H1 (cell line): ENCODE measurements at regions of chr6 and their contacts with region 1.

Region 1: GRCh38 chr6:51618563-51618962 is 468.9 kb downstream of the PKHD1 start:
- DNase-seq: no peak
- H3K4me3 ChIP-seq: no peak overlapping the region
- H3K27ac ChIP-seq: no peak overlapping the region
- H3K4me1 ChIP-seq: no peaks in the 10 kb centered on the region; a peak in 1 of 7 replicates
- H3K27me3 ChIP-seq: no peaks in the 10 kb centered on the region
- CTCF ChIP-seq: peak in 1 of 3 experiments; percentile 20; a peak in 1 of 4 replicates
- EP300 ChIP-seq: no peak
- POLR2A ChIP-seq: no peak
- RAD21 ChIP-seq: no peak

Region 2: DNA sequence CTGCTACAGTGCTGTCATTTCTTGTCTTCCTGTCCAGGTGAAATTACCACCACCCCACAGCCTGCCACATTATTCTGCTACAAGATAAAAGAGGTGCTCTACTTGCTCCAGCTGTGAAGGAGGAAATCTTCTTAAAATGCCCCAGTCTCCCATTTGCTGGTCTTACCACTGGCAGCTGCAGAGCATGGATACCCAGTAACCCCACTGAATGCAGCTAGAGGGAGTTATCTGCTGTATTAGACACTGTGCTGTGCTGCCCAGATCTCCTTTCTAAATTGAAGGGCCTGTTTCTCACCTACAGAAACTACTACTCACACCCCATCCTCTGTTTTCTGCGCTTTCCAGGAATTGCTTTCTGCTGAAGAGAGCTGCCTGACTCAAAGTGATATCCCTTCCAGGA is 49.0 kb before region 1 on chr6:
- CTCF ChIA-PET with region 1: interaction called, 11 read pairs
- POLR2A ChIA-PET with region 1: no interaction called
- DNase-seq: no peak
- H3K4me3 ChIP-seq: no peak overlapping the region
- H3K27ac ChIP-seq: no peak overlapping the region
- H3K4me1 ChIP-seq: no peaks in the 10 kb centered on the region
- H3K27me3 ChIP-seq: peaks cover 0 to 1% (median 0%) of the 10 kb centered on the region in 4 experiments; a peak in 1 of 7 replicates
- CTCF ChIP-seq: peak; percentile 12 to 63 (median 54)
- EP300 ChIP-seq: no peak
- POLR2A ChIP-seq: no peak
- RAD21 ChIP-seq: peak; percentile 49 to 64

Region 3: GRCh38 chr6:51598171-51598570 is 20.4 kb before region 1 on chr6:
- CTCF ChIA-PET with region 1: interaction called, 16 read pairs
- POLR2A ChIA-PET with region 1: no interaction called
- DNase-seq: no peak
- H3K4me3 ChIP-seq: no peak overlapping the region
- H3K27ac ChIP-seq: no peak overlapping the region
- H3K4me1 ChIP-seq: no peaks in the 10 kb centered on the region
- H3K27me3 ChIP-seq: no peaks in the 10 kb centered on the region
- CTCF ChIP-seq: no peak
- EP300 ChIP-seq: no peak
- POLR2A ChIP-seq: no peak
- RAD21 ChIP-seq: no peak

Region 4: GRCh38 chr6:51630011-51630410 is 11.4 kb after region 1 on chr6:
- CTCF ChIA-PET with region 1: interaction called, 26 read pairs
- POLR2A ChIA-PET with region 1: no interaction called
- DNase-seq: no peak
- H3K4me3 ChIP-seq: no peak overlapping the region
- H3K27ac ChIP-seq: no peak overlapping the region
- H3K4me1 ChIP-seq: no peaks in the 10 kb centered on the region
- H3K27me3 ChIP-seq: no peaks in the 10 kb centered on the region
- CTCF ChIP-seq: no peak
- EP300 ChIP-seq: no peak
- POLR2A ChIP-seq: no peak
- RAD21 ChIP-seq: no peak

Region 5: DNA sequence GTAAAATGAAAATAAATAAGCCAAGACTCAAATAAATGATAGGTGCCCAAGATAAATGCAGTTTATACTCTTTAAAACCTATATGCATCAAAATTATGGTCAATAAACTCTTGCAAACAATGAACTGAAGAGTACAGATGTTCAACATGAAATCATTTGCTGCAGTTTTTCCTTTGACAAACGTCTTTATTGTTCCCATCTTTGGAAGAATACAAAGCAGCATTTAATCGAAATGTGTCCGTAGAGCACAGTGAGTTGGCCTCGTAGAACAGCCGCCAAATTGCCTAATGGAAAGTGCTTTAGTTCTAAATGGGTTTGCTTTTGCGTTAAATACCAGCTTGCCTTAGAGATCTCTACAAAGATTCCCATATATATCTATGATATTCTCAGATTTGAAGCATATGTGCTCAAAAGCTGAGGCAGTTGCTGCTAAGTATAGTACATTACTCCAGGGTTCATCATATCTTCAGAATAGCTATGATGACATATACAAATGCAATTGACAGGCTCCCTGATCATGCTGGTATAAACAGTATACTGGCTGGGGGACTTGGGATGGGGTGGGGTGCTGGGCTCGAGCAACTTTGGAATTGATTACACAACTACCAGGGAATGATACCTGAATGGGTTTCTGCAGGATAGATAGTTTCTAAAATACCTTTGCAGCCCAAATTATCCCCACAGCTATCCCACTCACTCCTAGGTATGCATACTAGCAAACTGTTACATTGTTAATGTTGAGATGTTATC is 21.6 kb after region 1 on chr6:
- CTCF ChIA-PET with region 1: interaction called, 11 read pairs
- POLR2A ChIA-PET with region 1: no interaction called
- DNase-seq: no peak
- H3K4me3 ChIP-seq: no peak overlapping the region
- H3K27ac ChIP-seq: no peak overlapping the region
- H3K4me1 ChIP-seq: no peaks in the 10 kb centered on the region
- H3K27me3 ChIP-seq: no peaks in the 10 kb centered on the region
- CTCF ChIP-seq: no peak
- EP300 ChIP-seq: no peak
- POLR2A ChIP-seq: no peak
- RAD21 ChIP-seq: no peak

Region 6: GRCh38 chr6:51654647-51655046 is 36.1 kb after region 1 on chr6:
- CTCF ChIA-PET with region 1: no interaction called
- POLR2A ChIA-PET with region 1: no interaction called
- DNase-seq: no peak
- H3K4me3 ChIP-seq: no peak overlapping the region
- H3K27ac ChIP-seq: no peak overlapping the region
- H3K4me1 ChIP-seq: no peaks in the 10 kb centered on the region
- H3K27me3 ChIP-seq: peaks cover 0 to 1% (median 0%) of the 10 kb centered on the region in 4 experiments; a peak in 1 of 7 replicates
- CTCF ChIP-seq: no peak
- EP300 ChIP-seq: no peak
- POLR2A ChIP-seq: no peak
- RAD21 ChIP-seq: no peak